Adrenal gland (tissue), 19 donors: ENCODE measurements at regions of chr10 and their contacts with region 1.

Region 1: GRCh38 chr10:68156373-68157185 is 47.3 kb downstream of the MYPN start:
- DNase-seq: peak in 6 of 7 donors; percentile 43 to 86 (median 67)
- H3K4me3 ChIP-seq: no peak overlapping the region
- H3K27ac ChIP-seq: peak overlapping the region in 2 of 5 donors; percentile 1 to 88
- H3K4me1 ChIP-seq: peaks cover 29 to 37% of the 10 kb centered on the region in 2 donors
- H3K27me3 ChIP-seq: no peaks in the 10 kb centered on the region
- CTCF ChIP-seq: peak; percentile 63 to 84 (median 78)
- POLR2A ChIP-seq: no peak

Region 2: DNA sequence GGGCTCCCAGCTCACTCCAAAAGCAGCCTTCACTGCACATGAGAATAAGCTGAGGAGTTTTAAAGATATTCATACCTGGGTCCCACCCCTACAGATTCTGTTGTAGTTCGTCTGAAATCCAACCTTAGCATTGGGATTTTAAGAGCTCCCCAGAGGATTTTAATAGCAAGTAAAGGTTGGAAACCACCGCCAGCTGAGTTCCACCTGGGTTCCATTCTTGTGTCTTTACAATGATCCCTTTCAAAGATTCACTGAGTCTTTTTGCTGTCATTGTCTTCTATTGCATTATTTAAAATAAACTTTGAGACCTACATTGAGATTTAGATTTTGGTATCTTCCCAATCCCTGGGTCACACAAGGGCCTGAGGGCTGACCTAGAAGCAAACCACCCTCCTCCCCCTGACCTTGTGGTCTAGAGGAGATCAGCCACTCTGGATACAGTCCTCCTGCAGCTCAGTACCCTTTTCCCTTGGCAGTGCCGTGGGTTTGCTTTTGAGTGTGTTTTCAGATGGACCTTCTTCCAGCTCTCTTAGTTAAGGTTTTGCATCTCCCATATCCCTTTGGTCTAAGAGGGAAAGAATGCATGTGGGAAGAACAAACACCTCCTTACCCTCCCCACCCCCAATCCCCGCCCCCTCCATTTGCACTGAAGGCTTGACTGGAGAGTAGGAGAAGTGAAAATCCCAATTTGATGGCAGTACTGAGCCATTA is 294.7 kb before region 1 on chr10:
- intact Hi-C with region 1: loop called in 1 of 2 experiments (anchors 5 kb)
- DNase-seq: no peak
- H3K4me3 ChIP-seq: no peak overlapping the region
- H3K27ac ChIP-seq: no peak overlapping the region
- H3K4me1 ChIP-seq: no peaks in the 10 kb centered on the region
- H3K27me3 ChIP-seq: no peaks in the 10 kb centered on the region
- CTCF ChIP-seq: no peak
- POLR2A ChIP-seq: no peak

Region 3: GRCh38 chr10:68082872-68083271 is 73.7 kb before region 1 on chr10:
- intact Hi-C with region 1: loop called (anchors 5 to 10 kb)
- DNase-seq: no peak
- H3K4me3 ChIP-seq: no peak overlapping the region
- H3K27ac ChIP-seq: no peak overlapping the region
- H3K4me1 ChIP-seq: no peaks in the 10 kb centered on the region
- H3K27me3 ChIP-seq: no peaks in the 10 kb centered on the region
- CTCF ChIP-seq: peak; percentile 28 to 78 (median 64)
- POLR2A ChIP-seq: no peak